MCF 10A (cell line): ENCODE measurements at regions of chr14 and their contacts with region 1.

Region 1: GRCh38 chr14:96100161-96101029 is 61.2 kb downstream of the C14orf132 start:
- DNase-seq: peak; percentile 80
- H3K4me3 Mint-ChIP-seq: no peak overlapping the region
- H3K27ac Mint-ChIP-seq: no peak overlapping the region
- H3K4me1 Mint-ChIP-seq: peaks cover 15% of the 10 kb centered on the region
- H3K27me3 Mint-ChIP-seq: no peaks in the 10 kb centered on the region
- CTCF ChIP-seq: peak; percentile 96

Region 2: GRCh38 chr14:95993768-95994592 is 106.4 kb before region 1 on chr14:
- CTCF ChIA-PET with region 1: interaction called, 63 read pairs
- POLR2A ChIA-PET with region 1: interaction called, 7 read pairs
- intact Hi-C with region 1: loop called (anchors 1 kb)
- DNase-seq: peak; percentile 69
- H3K4me3 Mint-ChIP-seq: no peak overlapping the region
- H3K27ac Mint-ChIP-seq: no peak overlapping the region
- H3K4me1 Mint-ChIP-seq: no peaks in the 10 kb centered on the region
- H3K27me3 Mint-ChIP-seq: peaks cover 76% of the 10 kb centered on the region
- CTCF ChIP-seq: peak; percentile 95

Region 3: DNA sequence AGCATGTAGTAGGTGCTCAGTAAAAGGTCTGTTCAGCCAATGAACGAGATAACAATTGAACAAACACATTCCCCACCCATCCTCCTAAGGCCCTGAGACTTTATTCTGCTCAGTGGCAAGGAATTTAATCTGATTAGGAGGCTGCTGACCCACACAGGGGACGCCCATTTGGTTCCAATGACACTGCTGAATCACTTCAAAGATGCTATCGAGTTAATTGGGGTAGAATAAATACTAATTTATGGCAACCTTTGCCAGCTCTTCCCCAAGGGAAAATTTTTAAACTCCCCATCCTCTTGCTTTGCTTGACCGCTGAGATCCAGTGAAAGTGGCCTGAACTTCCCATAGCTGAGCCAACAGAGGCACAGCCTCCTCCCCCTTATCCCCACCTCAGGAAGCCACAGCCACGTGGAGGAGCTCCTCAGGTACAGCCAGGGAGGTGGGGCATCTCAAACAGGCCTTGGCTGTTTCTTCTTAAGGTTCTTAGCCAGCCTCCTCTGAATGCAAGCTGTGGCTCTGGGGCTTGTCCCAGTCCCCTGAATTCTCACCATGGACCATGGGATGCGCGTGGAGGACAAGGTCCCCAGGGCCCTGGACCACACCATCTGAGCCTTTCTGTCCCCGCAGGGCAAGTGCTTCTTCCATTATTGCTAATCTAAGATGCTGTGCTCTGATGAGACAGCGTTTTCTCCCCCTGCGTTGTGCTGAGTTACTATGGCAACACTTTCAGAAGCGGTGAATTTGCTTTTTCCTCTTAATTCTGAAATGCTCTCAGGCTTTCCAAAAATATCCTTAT is 34.5 kb before region 1 on chr14:
- CTCF ChIA-PET with region 1: interaction called, 188 read pairs
- POLR2A ChIA-PET with region 1: interaction called, 4 read pairs
- intact Hi-C with region 1: no loop called
- DNase-seq: no peak
- H3K4me3 Mint-ChIP-seq: no peak overlapping the region
- H3K27ac Mint-ChIP-seq: no peak overlapping the region
- H3K4me1 Mint-ChIP-seq: no peaks in the 10 kb centered on the region
- H3K27me3 Mint-ChIP-seq: peaks cover 12% of the 10 kb centered on the region
- CTCF ChIP-seq: no peak

Region 4: DNA sequence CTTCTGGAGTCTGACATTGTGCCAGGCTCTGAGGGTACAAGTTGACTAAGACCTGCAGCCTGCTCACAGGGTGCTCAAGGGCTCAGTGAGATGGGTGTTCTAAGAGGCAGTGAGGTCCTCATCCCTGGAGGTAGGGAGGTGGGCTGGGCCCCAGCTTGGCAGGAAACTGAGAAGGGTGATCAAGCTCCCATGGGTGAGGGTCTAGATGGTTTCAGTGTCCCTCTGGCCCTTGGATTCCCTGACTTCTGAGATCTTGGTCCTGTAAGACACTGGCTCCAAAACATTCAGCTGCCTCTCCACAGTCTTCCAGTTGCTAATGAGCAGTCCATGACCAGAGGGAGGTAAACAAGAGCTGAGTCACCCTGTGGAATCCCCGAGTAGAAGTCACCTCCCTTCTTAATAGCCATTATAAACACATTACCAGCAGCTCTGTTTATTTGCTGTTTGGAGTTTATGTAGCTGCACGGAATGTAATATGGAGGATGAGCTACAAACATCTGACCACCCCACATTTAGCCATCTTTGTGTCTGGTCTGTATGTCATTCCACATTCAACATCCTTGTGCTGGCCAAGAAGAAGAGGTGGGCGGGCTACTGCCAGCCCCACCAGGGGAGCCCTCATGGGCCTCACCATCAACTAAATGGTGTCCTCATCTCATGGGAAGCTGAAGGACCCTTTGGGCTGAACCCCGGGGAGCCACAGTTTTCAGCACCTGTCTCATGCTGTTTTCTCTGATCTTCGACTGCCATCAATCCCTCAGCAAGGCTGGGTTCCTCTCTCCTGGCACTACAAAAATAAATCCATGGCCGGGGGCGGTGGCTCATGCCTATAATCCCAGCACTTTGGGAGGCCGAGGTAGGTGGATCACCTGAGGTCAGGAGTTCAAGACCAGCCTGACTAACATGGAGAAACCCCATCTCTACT is 67.1 kb after region 1 on chr14:
- CTCF ChIA-PET with region 1: no interaction called
- POLR2A ChIA-PET with region 1: no interaction called
- intact Hi-C with region 1: loop called (anchors 10 kb)
- DNase-seq: peak; percentile 58
- H3K4me3 Mint-ChIP-seq: no peak overlapping the region
- H3K27ac Mint-ChIP-seq: no peak overlapping the region
- H3K4me1 Mint-ChIP-seq: peaks cover 5% of the 10 kb centered on the region
- H3K27me3 Mint-ChIP-seq: peaks cover 28% of the 10 kb centered on the region
- CTCF ChIP-seq: no peak

Region 5: DNA sequence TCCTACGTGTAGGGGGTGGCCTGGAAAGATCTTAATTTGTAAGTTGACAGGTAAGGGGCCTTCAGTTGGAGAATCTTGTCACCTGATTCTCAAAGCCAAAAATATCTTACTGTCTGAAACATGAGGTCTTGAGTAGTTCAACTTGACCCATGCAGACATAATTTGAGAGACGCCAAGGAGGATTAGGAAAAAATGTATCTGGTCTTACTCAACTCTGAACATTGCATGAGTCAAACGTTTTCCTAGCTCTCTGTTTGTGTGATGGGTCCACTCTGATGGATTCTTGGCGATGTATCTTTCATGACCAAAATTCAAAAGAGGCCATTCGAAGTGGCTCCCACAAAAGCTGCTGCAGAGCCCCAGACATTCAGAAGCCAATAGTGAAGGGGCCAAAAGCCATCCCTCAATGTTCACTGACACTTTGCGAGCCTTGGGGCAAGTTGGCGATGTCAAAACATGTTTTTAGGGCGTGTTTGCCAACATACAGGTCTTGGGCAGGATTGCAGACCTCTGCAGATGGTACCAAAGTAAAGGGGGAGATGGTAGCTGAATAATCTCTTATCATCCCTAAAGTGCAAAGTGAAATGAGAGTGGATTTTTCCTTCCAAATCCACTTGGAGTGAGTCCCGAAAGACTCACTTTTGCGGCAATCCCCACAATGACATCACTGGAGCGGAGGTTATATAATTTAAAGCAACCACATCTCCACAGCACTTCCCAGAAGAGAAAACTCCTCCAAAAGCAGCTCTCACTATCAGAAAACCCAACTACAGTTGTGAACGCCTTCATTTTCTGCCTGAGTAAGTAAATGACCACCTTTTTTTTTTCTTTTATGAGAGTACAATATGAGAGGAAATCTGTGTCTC is 155.3 kb after region 1 on chr14 and contains the start of gene BDKRB1:
- CTCF ChIA-PET with region 1: interaction called, 5 read pairs
- POLR2A ChIA-PET with region 1: interaction called, 12 read pairs
- intact Hi-C with region 1: no loop called
- DNase-seq: peak; percentile 86
- H3K4me3 Mint-ChIP-seq: peak within 1 kb of the TSS; percentile 39
- H3K27ac Mint-ChIP-seq: peak within 1 kb of the TSS; percentile 39
- H3K4me1 Mint-ChIP-seq: peaks cover 36% of the 10 kb centered on the region
- H3K27me3 Mint-ChIP-seq: no peaks in the 10 kb centered on the region
- CTCF ChIP-seq: no peak
- total RNA-seq, gene BDKRB1: 0.32 and 0.51 TPM in 2 replicates

Region 6: DNA sequence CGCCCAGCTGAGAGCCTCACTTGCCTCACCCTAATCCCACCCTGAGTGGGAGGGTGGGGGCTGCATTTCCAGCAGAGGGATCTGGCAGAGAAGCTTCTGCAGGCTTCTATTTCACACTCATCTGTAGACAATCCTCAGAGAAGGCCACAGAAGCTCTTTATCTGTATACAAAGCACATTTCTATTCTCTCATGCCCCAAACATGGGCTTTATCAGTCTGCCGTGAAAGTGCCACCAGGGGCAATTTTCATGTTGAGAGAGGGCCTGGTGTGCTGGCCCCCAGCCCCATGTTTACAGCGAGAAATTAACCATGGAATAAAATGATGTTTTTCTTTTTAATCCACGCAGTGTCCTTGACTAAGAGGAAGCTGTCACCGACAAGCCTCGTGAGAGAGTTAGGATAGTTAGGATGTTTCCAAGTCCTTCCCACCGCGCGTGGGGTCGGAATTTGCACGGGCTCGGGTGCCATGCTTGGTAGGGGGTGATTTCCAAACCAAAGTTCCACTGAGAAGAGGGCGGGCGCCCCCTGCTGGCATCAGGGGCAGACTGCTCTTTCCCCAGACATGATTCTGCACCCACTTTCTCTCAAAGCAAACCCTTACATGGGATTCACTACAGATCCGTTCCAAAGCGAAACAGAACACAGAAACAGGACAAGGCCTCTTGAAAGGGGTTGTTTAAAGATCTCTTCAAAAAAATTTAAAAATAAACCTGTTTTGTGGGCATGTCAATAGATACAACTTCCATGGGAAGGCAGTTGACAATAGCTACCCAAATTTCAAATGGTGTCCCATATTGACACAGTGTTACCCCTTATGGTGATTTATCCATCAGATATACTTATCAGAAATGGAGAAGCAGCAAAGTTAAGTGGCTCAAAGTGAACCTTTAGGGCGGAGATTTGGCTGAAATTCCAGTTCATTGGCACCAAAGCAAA is 175.1 kb after region 1 on chr14:
- CTCF ChIA-PET with region 1: interaction called, 298 read pairs
- POLR2A ChIA-PET with region 1: interaction called, 6 read pairs
- intact Hi-C with region 1: loop called (anchors 1 kb)
- DNase-seq: peak; percentile 70
- H3K4me3 Mint-ChIP-seq: no peak overlapping the region
- H3K27ac Mint-ChIP-seq: no peak overlapping the region
- H3K4me1 Mint-ChIP-seq: peaks cover 11% of the 10 kb centered on the region
- H3K27me3 Mint-ChIP-seq: no peaks in the 10 kb centered on the region
- CTCF ChIP-seq: peak; percentile 94

Region 7: DNA sequence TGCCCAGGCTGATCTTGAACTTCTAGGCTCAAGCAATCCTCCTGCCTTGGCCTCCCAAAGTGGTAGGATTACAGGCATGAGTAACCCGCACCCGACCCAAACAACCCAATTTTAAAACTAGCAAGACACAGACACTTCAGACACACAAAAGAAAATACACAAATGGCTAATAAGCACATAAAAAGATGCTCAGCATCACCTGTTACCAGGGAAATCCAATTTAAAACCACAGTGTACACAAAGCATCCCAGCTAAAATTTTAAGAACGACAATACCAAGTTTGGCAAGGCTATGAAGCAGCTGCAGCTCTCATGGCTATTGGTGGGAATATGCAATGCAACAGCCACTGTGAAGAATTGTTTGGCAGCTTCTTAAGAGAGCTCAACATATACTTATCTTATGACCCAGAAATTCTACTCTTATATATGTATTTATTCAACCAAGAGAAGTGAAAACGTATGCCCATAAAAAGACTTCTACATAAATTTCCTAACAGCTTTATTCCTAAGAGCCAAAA is 197.7 kb after region 1 on chr14:
- CTCF ChIA-PET with region 1: no interaction called
- POLR2A ChIA-PET with region 1: no interaction called
- intact Hi-C with region 1: no loop called
- DNase-seq: no peak
- H3K4me3 Mint-ChIP-seq: no peak overlapping the region
- H3K27ac Mint-ChIP-seq: no peak overlapping the region
- H3K4me1 Mint-ChIP-seq: no peaks in the 10 kb centered on the region
- H3K27me3 Mint-ChIP-seq: no peaks in the 10 kb centered on the region
- CTCF ChIP-seq: no peak